ENCODE measurements at regions of chr2 and their contacts with region 1.

Region 1: DNA sequence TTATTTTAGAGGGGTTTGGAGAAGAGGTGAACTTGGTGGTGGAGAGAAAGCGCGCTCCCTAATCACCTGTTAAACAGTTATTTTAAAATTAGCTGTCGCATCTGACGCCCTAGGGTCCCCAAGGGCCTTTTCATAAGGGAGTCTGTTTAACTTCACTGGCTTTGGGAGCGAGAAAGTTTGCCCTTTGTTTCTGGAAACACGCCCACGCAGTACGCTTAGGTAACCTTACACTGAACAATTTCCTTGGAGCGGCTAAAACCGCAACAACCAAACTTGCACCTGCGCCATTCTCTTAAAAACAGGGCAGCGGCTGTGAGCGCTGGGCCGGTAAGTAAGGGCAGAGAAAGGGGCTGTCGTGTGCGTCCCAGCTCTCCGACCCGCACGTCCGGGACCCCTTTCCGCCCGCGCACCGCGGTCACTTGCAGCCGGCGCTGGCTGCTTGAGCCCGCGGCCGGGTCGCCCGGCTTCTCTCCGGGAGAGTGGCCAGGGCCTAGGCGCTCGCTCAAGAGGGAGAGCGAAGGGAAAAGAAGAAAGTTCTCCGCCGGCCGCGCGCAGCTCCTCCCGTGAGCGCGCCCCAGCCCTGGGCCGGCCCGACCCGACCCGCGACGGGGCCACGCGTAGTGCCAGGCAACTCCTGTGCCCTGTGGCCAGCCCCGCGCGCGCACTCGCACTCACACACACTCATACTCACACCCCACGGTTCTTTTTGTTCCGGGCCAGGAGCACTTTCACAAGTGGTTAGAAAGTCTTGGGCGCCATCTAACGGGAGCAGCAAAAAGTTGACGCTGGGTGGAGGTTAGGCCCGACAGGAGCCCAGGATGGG is 19.2 kb downstream of the POU3F3 start:
- DNase-seq: no peak
- ATAC-seq: peak; percentile 95
- H3K4me3 ChIP-seq: peak overlapping the region; percentile 60
- H3K27ac ChIP-seq: no peak overlapping the region
- H3K4me1 ChIP-seq: no peaks in the 10 kb centered on the region
- H3K27me3 ChIP-seq: peaks cover 13 to 28% of the 10 kb centered on the region in 2 experiments
- CTCF ChIP-seq: peak; percentile 62 to 70 (median 62)
- EP300 ChIP-seq: no peak
- POLR2A ChIP-seq: no peak
- RAD21 ChIP-seq: peak; percentile 79

Region 2: DNA sequence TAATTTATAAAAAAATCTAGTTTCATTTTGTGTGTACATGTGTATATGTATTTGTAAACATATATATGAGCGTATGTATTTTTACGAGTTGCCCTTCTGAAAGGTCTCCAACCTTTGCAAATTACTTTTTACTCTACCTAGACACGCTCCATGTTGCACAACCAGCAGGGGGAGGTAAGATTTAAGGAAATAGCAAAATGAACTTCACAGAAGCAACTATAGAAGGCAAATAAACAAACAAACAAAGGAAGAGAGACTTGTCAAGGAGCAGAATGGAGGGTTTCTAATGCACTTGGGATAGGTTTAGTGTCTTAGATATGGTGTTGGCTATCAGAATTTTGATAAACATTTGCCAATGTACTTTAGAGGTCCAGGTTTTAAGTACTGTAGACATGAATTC is 839.7 kb before region 1 on chr2:
- CTCF ChIA-PET with region 1: no interaction called
- POLR2A ChIA-PET with region 1: no interaction called
- RAD21 ChIA-PET with region 1: no interaction called
- SMC1A ChIA-PET with region 1: no interaction called
- in situ Hi-C with region 1: loop called (anchors 25 kb)
- intact Hi-C with region 1: no loop called
- DNase-seq: no peak
- ATAC-seq: no peak
- H3K4me3 ChIP-seq: no peak overlapping the region
- H3K27ac ChIP-seq: no peak overlapping the region
- H3K4me1 ChIP-seq: no peaks in the 10 kb centered on the region
- H3K27me3 ChIP-seq: no peaks in the 10 kb centered on the region
- CTCF ChIP-seq: peak; percentile 9 to 37 (median 36); a peak in 3 of 6 replicates
- EP300 ChIP-seq: no peak
- POLR2A ChIP-seq: no peak
- RAD21 ChIP-seq: peak; percentile 50

Region 3: DNA sequence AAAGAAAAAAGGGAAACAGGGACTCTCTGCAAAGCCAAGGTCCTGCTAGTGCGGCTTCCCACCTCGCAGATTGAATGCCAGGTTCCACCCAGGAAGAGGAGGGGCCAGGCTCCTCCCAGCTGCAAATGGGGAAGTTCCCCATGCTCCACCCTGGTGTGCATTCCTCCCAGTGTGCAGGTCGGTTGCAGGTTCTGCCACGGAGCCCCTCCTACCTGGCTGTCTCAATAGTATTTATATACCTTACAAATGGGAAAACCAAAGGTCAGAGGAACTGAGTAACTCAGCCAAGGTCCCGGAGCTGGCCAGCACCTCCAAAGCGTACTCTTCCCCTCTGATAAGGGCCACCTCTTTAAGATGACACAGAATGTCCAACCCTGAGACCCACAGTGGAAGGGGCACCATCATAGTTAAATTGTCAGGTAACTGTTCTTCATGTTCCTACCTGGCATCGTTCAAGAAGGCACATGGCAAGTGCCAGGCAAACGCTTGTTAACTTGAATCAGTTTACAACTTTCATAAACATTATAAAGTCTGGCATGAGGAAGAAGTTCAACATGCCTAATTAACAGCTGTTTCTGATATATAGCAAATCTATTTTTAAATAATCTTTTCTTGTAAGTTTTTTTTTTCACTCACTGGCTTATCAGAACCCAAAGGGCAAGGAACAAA is 16.3 kb after region 1 on chr2:
- CTCF ChIA-PET with region 1: no interaction called
- POLR2A ChIA-PET with region 1: no interaction called
- RAD21 ChIA-PET with region 1: no interaction called
- SMC1A ChIA-PET with region 1: no interaction called
- in situ Hi-C with region 1: no loop called
- intact Hi-C with region 1: no loop called
- DNase-seq: no peak
- ATAC-seq: no peak
- H3K4me3 ChIP-seq: no peak overlapping the region
- H3K27ac ChIP-seq: no peak overlapping the region
- H3K4me1 ChIP-seq: no peaks in the 10 kb centered on the region
- H3K27me3 ChIP-seq: no peaks in the 10 kb centered on the region; a peak in 1 of 4 replicates
- CTCF ChIP-seq: no peak
- EP300 ChIP-seq: no peak
- POLR2A ChIP-seq: no peak
- RAD21 ChIP-seq: no peak

Region 4: DNA sequence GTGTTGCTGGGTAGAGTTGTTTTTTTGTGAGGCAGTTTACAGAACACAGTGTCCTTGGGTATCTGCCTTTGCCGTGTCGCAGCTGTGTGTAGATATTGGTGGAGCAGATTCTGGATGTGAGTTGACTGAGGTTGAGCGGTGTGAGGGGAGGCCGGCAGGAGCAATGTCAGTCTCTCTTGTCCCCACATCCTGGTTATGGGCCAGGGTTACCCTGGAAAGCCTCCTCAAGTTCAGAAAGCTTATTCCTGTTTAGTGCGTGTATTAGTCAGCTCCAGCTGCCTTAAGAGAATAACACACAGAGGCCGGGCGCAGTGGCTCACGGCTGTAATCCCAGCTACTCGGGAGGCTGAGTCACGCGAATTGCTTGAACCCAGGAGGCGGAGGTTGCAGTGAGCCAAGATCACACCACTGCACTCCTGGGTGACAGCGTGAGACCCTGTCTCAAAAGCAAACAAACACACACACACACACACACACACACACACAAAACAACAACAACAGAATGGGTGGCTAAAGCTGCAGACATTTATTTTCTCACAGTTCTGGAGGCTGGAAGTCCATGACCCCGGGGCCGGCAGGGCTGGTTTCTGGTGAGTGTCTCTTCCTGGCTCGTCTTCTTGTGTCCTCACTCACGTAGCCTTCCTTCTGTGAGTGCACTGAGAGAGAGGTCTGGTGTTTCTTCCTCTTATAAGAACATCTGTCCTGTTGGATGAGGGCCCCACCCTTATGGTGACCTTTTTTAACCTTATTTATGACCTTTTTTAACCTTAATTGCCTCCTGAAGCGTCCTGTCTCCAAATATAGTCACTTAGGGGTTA is 876.7 kb after region 1 on chr2:
- CTCF ChIA-PET with region 1: no interaction called
- POLR2A ChIA-PET with region 1: no interaction called
- RAD21 ChIA-PET with region 1: no interaction called
- SMC1A ChIA-PET with region 1: no interaction called
- in situ Hi-C with region 1: no loop called
- intact Hi-C with region 1: no loop called
- DNase-seq: no peak
- ATAC-seq: no peak
- H3K4me3 ChIP-seq: 0 out of 2 replicates have a peak overlapping the region, but pooled peaks have one; percentile 27
- H3K27ac ChIP-seq: peak overlapping the region; percentile 28
- H3K4me1 ChIP-seq: peaks cover 35% of the 10 kb centered on the region
- H3K27me3 ChIP-seq: no peaks in the 10 kb centered on the region
- CTCF ChIP-seq: no peak
- EP300 ChIP-seq: no peak
- POLR2A ChIP-seq: no peak
- RAD21 ChIP-seq: no peak